ENCODE measurements at regions of chr2 and their contacts with region 1.

Region 1: GRCh38 chr2:54099829-54100585 is 15.4 kb upstream of the ACYP2 start:
- DNase-seq: peak; percentile 45
- ATAC-seq: peak; percentile 75
- H3K4me3 Mint-ChIP-seq: peak overlapping the region; percentile 52
- H3K27ac Mint-ChIP-seq: peak overlapping the region; percentile 91
- H3K4me1 Mint-ChIP-seq: peaks cover 81% of the 10 kb centered on the region
- H3K27me3 Mint-ChIP-seq: no peaks in the 10 kb centered on the region
- CTCF ChIP-seq: no peak

Region 2: GRCh38 chr2:53865264-53865663 is 234.7 kb before region 1 on chr2:
- CTCF ChIA-PET with region 1: no interaction called
- POLR2A ChIA-PET with region 1: no interaction called
- intact Hi-C with region 1: no loop called
- DNase-seq: no peak
- ATAC-seq: no peak
- H3K4me3 Mint-ChIP-seq: no peak overlapping the region
- H3K27ac Mint-ChIP-seq: no peak overlapping the region
- H3K4me1 Mint-ChIP-seq: no peaks in the 10 kb centered on the region
- H3K27me3 Mint-ChIP-seq: no peaks in the 10 kb centered on the region
- CTCF ChIP-seq: no peak

Region 3: GRCh38 chr2:53913721-53914120 is 186.3 kb before region 1 on chr2:
- CTCF ChIA-PET with region 1: no interaction called
- POLR2A ChIA-PET with region 1: interaction called, 11 read pairs
- intact Hi-C with region 1: no loop called
- DNase-seq: no peak
- ATAC-seq: peak; percentile 85
- H3K4me3 Mint-ChIP-seq: no peak overlapping the region
- H3K27ac Mint-ChIP-seq: peak overlapping the region; percentile 27
- H3K4me1 Mint-ChIP-seq: peaks cover 12% of the 10 kb centered on the region
- H3K27me3 Mint-ChIP-seq: no peaks in the 10 kb centered on the region
- CTCF ChIP-seq: no peak

Region 4: GRCh38 chr2:54041135-54041534 is 58.9 kb before region 1 on chr2:
- CTCF ChIA-PET with region 1: no interaction called
- POLR2A ChIA-PET with region 1: no interaction called
- intact Hi-C with region 1: no loop called
- DNase-seq: no peak
- ATAC-seq: no peak
- H3K4me3 Mint-ChIP-seq: no peak overlapping the region
- H3K27ac Mint-ChIP-seq: no peak overlapping the region
- H3K4me1 Mint-ChIP-seq: no peaks in the 10 kb centered on the region
- H3K27me3 Mint-ChIP-seq: no peaks in the 10 kb centered on the region
- CTCF ChIP-seq: no peak

Region 5: GRCh38 chr2:54054271-54054670 is 45.7 kb before region 1 on chr2:
- CTCF ChIA-PET with region 1: interaction called, 9 read pairs
- POLR2A ChIA-PET with region 1: interaction called, 3 read pairs
- intact Hi-C with region 1: loop called (anchors 2 kb)
- DNase-seq: no peak
- ATAC-seq: no peak
- H3K4me3 Mint-ChIP-seq: peak overlapping the region; percentile 37
- H3K27ac Mint-ChIP-seq: peak overlapping the region; percentile 82
- H3K4me1 Mint-ChIP-seq: peaks cover 32% of the 10 kb centered on the region
- H3K27me3 Mint-ChIP-seq: no peaks in the 10 kb centered on the region
- CTCF ChIP-seq: no peak

Region 6: DNA sequence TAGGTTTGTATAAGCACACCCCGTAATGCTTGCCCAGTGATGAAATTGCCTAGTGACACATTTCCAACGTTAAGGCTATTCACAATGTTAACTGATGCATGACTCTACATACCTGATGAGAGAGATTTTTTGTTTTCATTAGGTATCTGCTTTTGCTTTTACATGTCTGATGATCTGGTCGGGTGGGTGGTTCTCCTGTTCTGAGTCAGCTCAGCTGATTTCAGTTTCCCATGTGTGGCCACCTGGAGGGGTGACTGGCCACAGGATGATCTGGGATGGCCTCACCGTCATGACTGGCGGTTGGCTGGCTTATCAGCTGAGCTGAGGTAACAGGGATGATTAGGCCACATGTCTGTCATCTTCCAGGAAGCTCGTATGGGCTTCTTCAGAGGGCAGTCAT is 18.4 kb before region 1 on chr2:
- CTCF ChIA-PET with region 1: interaction called, 5 read pairs
- POLR2A ChIA-PET with region 1: interaction called, 4 read pairs
- intact Hi-C with region 1: loop called (anchors 2 kb)
- DNase-seq: no peak
- ATAC-seq: peak; percentile 72
- H3K4me3 Mint-ChIP-seq: no peak overlapping the region
- H3K27ac Mint-ChIP-seq: peak overlapping the region; percentile 27
- H3K4me1 Mint-ChIP-seq: peaks cover 22% of the 10 kb centered on the region
- H3K27me3 Mint-ChIP-seq: no peaks in the 10 kb centered on the region
- CTCF ChIP-seq: no peak